Activated naive CD4-positive, alpha-beta T cell treated with anti-CD3 and anti-CD28 coated beads for 36 hours (primary cell): ENCODE measurements at regions of chr12 and their contacts with region 1.

Region 1: GRCh38 chr12:9741726-9742125 is 8.8 kb upstream of the CLECL1 start:
- DNase-seq: peak; percentile 91
- H3K4me3 Mint-ChIP-seq: peak overlapping the region; percentile 70
- H3K27ac Mint-ChIP-seq: peak overlapping the region; percentile 60
- H3K4me1 Mint-ChIP-seq: peaks cover 66% of the 10 kb centered on the region
- H3K27me3 Mint-ChIP-seq: no peaks in the 10 kb centered on the region

Region 2: GRCh38 chr12:9634177-9634803 is 107.4 kb before region 1 on chr12:
- CTCF ChIA-PET with region 1: interaction called, 31 read pairs
- intact Hi-C with region 1: loop called (anchors 1 kb)
- DNase-seq: peak; percentile 95
- H3K4me3 Mint-ChIP-seq: peak overlapping the region; percentile 55
- H3K27ac Mint-ChIP-seq: peak overlapping the region; percentile 90
- H3K4me1 Mint-ChIP-seq: peaks cover 56% of the 10 kb centered on the region
- H3K27me3 Mint-ChIP-seq: no peaks in the 10 kb centered on the region

Region 3: DNA sequence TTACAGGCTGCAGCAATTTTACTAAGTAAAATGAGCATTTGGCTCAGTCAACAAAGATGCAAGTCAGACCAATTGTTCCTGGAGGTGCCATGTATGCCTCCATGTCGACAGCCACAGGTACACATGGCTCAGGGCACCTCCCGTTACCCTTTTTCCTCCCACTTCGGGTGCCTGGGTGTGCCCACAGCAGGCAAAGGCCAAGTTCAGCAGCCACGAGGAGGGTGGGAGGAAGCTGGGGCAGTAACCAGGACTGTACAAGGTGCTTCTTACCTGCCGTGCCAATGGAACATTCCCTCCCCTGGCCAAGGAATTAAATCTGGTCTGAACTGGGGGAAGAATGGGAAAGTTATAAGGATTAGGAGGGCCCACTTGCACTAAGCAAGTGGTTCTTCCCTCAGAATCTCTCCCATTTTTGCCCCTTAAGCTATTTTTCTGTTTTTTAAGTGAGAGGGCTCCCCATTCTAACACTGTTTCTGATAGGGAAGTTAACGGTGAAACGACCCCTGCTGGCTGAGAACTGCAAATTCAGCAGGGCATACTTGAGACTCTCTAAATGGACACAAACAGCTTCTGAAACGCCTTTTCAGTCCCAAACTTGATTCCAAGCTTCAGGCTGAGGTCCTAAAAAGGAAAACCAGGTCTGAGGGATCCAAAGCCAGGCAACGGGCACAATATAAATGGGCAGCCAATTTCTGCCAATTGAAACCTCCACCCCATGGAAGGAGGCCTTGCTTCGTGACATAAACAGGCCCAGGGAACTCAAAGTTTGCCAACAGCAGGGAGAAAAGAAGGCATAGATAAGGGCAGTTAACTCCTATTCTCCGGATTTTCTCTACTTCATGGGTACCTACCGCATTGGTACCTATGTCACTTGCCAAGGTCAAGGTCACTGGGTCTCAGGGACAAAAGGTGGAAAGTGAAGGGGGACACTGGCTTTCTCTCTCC is 33.6 kb before region 1 on chr12:
- CTCF ChIA-PET with region 1: interaction called, 6 read pairs
- intact Hi-C with region 1: loop called (anchors 2 kb)
- DNase-seq: peak; percentile 86
- H3K4me3 Mint-ChIP-seq: peak overlapping the region; percentile 70
- H3K27ac Mint-ChIP-seq: peak overlapping the region; percentile 92
- H3K4me1 Mint-ChIP-seq: peaks cover 50% of the 10 kb centered on the region
- H3K27me3 Mint-ChIP-seq: no peaks in the 10 kb centered on the region

Region 4: DNA sequence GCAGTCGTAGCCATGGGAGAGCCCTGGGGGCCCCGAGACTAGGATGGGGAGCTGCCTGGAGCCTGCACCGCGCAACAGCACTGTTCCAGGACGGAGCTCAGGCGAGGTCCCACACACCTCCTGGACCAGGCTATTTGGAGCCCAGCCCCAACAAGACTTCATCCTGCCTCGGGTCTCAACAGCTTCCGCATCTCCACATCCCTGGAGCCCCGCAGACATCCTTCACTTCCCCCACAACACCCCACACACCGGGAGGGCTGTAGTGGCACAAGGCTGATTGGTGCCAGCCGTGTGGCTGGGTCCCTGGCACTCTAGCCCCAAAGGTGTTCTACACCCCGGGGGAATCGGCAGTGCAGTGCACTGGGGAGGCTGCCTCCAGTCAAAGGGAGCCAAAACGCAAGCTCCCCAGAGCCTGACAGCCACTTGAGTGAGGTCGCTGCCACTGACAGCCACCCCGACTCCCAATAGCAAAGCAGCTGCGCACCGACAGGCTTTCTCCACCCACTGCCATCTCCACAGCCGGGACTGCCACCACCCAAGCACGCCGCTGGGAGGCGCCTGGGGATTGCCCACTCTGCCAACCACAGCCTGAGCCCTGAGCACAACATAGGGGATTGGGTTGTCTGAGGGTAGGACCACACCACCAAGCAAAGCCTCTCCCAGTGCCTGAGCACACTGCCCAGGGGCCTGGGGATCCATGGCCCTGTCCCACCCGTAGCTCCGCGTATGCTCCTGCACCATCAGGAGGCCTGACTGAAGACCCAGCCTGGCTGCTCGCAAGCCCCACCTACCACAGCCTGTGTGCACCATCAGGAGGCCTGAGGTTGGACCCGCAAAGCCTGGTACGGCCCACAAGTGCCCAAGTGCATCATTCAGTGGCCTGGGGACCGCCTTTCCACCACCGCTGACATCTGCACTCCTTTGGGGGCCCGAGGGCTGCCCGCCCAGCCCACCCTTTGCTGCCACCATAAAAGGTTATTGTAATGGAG is 72.4 kb after region 1 on chr12:
- CTCF ChIA-PET with region 1: interaction called, 24 read pairs
- intact Hi-C with region 1: no loop called
- DNase-seq: peak; percentile 93
- H3K4me3 Mint-ChIP-seq: peak overlapping the region; percentile 77
- H3K27ac Mint-ChIP-seq: no peak overlapping the region
- H3K4me1 Mint-ChIP-seq: peaks cover 9% of the 10 kb centered on the region
- H3K27me3 Mint-ChIP-seq: no peaks in the 10 kb centered on the region

Region 5: GRCh38 chr12:9980126-9980525 is 238.4 kb after region 1 on chr12:
- CTCF ChIA-PET with region 1: no interaction called
- intact Hi-C with region 1: no loop called
- DNase-seq: no peak
- H3K4me3 Mint-ChIP-seq: no peak overlapping the region
- H3K27ac Mint-ChIP-seq: no peak overlapping the region
- H3K4me1 Mint-ChIP-seq: no peaks in the 10 kb centered on the region
- H3K27me3 Mint-ChIP-seq: peaks cover 3% of the 10 kb centered on the region

Region 6: GRCh38 chr12:10119066-10119465 is 377.3 kb after region 1 on chr12:
- CTCF ChIA-PET with region 1: no interaction called
- intact Hi-C with region 1: no loop called
- DNase-seq: no peak
- H3K4me3 Mint-ChIP-seq: no peak overlapping the region
- H3K27ac Mint-ChIP-seq: no peak overlapping the region
- H3K4me1 Mint-ChIP-seq: no peaks in the 10 kb centered on the region
- H3K27me3 Mint-ChIP-seq: no peaks in the 10 kb centered on the region

Region 7: DNA sequence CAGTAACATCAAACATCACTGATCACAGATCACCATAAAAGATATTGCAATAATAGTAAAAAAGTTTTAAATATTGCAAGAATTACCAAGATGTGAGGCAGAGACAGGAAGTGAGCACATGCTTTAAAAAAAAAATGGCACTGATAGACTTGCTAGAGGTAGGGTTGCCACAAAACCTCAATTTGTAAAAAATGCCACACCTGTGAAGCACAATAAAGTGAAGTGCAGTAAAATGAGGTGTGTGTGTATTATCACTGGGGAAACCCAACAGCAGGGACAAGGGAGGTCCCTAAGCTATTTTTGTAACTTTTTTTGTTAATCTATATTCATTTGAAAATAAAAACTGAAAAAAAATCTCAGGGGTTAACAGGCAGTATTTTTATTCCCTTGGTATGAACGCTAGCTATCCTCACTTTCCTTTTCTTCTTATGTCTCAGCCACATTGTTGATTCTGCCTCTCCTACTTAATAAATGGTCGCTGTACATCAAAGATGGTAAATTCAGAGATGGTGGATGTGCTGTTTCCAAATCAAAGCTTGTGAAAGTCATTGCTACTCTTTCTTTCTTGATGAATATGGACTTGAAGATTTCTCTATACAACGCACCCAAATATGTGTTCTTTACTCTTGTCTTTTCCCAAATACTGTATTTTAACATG is 552.0 kb after region 1 on chr12:
- CTCF ChIA-PET with region 1: no interaction called
- intact Hi-C with region 1: loop called (anchors 1 kb)
- DNase-seq: no peak
- H3K4me3 Mint-ChIP-seq: no peak overlapping the region
- H3K27ac Mint-ChIP-seq: peak overlapping the region; percentile 7
- H3K4me1 Mint-ChIP-seq: peaks cover 16% of the 10 kb centered on the region
- H3K27me3 Mint-ChIP-seq: peaks cover 5% of the 10 kb centered on the region

Region 8: GRCh38 chr12:10673660-10674384 is 932.1 kb after region 1 on chr12 and contains the start of gene STYK1:
- CTCF ChIA-PET with region 1: no interaction called
- intact Hi-C with region 1: loop called (anchors 5 kb)
- DNase-seq: peak; percentile 86
- H3K4me3 Mint-ChIP-seq: peak within 1 kb of the TSS; percentile 68
- H3K27ac Mint-ChIP-seq: no peak within 1 kb of the TSS
- H3K4me1 Mint-ChIP-seq: peaks cover 20% of the 10 kb centered on the region
- H3K27me3 Mint-ChIP-seq: peaks cover 34% of the 10 kb centered on the region
- total RNA-seq, gene STYK1: not detected